Uterus (tissue), 4 donors: ENCODE measurements at regions of chr21 and their contacts with region 1.

Region 1: DNA sequence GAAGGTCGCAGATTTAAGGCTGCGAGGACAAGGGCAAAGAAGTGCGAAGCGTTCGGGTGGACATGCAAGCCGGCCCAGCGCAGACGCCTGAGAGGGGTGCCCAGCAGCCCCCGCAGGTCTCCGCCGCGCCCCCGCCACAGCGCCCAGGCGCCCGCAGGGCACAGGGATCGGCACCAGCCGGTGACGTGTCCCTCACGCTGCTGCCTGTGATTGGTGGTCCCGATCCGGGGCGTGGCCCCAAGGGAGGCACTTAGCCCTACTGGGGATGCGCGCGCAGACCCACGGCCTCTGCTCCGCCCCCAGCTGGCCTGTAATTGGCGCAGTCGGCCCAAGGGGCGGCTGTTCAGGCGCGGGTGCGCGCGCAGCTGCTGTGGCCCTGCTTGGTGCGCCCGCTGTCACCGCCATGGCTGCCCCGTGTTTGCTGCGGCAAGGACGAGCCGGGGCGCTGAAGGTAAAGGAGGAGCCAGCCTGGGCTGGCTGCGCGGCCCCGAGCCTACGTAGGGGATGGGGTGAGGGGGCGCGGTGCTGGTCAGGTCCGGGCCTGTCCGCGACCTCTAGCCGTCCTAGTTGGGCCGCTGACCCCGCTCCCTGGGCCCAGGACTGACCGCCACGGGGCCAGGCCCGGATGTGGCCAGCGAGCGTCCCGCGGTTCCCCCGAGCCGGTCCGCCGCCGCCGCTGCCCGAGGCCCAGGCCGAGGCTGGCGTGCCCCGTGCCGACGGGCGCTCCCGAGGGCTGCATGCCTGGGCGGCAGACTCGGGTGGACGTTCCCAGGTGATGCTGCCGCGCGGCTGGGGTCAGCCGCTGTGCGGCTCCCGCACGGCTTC is at the start of gene NDUFV3:
- DNase-seq: peak; percentile 99 to 100
- H3K4me3 ChIP-seq: peak within 1 kb of the TSS; percentile 58 to 69
- H3K27ac ChIP-seq: peak within 1 kb of the TSS; percentile 89 to 92
- H3K4me1 ChIP-seq: no peaks in the 10 kb centered on the region
- H3K27me3 ChIP-seq: no peaks in the 10 kb centered on the region
- CTCF ChIP-seq: peak in 1 of 4 experiments; percentile 11
- POLR2A ChIP-seq: peak; percentile 92 to 97
- total RNA-seq, gene NDUFV3: 41.5 to 55.9 (median 45.7) TPM

Region 2: GRCh38 chr21:42677339-42678321 is 215.5 kb before region 1 on chr21:
- intact Hi-C with region 1: no loop called
- DNase-seq: no peak
- H3K4me3 ChIP-seq: no peak overlapping the region
- H3K27ac ChIP-seq: no peak overlapping the region
- H3K4me1 ChIP-seq: no peaks in the 10 kb centered on the region
- H3K27me3 ChIP-seq: no peaks in the 10 kb centered on the region
- CTCF ChIP-seq: no peak
- POLR2A ChIP-seq: no peak

Region 3: DNA sequence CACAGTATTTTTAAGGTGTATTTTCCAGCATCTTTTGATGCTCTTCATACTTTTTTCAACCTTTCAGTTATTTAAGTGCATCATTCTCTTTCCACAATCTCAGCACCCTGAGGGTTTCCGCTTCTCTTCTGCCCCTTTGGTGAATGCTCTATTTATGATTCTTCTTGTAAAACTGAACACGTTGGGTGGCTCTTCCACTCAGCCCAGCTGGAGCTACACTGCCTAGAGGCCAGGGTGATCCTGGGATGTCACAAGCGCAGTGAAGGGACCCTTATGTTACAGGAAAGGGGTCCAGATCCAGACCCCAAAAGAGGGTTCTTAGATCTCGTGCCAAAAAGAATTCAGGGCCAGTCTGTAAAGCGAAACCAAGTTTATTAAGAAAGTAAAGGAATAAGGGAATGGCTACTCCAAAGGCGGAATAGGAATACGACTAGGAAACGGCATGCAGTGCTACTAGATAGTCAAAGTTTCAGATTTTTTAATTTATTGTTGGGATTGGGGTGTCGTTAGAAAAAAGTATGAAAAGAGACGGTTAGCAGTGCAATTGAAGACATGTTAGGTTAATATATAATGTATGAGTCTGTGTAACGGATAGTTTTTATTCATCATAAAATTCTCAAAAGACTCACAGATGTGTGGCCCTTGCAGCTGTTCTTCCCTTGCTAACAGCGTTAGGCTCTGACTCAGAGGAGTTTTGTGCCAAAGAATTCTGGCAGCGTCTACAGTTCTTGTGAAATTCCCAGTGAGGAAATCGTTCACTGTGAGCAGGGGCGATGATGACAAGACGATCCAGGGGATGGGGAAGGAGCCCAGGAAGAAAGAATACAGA is 46.7 kb after region 1 on chr21:
- intact Hi-C with region 1: no loop called
- DNase-seq: peak; percentile 90 to 95
- H3K4me3 ChIP-seq: peak overlapping the region; percentile 6 to 12
- H3K27ac ChIP-seq: peak overlapping the region; percentile 81 to 84
- H3K4me1 ChIP-seq: no peaks in the 10 kb centered on the region
- H3K27me3 ChIP-seq: no peaks in the 10 kb centered on the region
- CTCF ChIP-seq: no peak
- POLR2A ChIP-seq: no peak

Region 4: DNA sequence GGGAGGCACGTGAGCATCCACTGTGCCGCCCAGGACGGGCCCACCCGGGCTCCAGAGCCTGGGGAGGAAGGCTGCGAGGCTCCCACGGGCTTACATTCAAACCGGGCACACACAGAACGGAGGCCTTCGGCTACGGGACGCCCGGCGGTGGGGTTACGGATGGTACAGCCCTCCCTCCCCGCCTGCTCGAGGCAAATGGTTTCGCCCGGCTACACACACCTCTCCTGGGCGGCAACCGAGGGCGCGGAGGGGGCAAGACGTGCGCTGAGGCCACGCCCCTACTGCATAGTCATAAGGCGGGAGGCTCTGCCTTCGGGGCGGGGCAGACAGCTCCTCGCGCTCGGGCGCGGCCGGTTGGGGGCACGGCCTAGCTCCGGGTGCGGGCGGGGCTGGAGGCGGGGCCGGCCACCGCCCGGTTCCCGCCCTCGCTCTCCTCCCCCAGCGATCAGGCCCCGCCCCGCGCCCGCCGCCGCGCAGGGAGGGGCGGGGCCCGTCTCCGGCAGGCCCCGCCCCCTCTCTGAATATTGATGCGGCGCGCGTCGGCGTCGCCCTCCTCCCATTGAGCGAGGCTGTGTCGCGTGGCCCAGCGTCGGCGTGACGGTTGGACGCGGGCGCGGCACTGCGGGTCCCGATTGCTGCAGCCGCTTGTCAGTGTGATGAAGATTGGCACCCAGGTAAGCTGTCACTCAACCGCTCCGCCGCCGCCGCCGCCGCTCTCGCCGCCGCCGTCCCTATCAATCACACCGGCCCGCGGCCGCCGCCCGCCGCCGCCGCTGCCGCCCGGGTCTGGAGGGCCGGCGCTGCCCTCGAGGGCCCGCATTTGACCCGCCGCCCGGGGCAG is 81.1 kb after region 1 on chr21 and contains the start of gene PKNOX1:
- intact Hi-C with region 1: loop called (anchors 10 kb)
- DNase-seq: peak; percentile 98 to 99
- H3K4me3 ChIP-seq: peak within 1 kb of the TSS; percentile 61 to 82
- H3K27ac ChIP-seq: peak within 1 kb of the TSS; percentile 99 to 100
- H3K4me1 ChIP-seq: no peaks in the 10 kb centered on the region
- H3K27me3 ChIP-seq: no peaks in the 10 kb centered on the region
- CTCF ChIP-seq: peak in 1 of 4 experiments; percentile 16
- POLR2A ChIP-seq: peak; percentile 64 to 81
- total RNA-seq, gene PKNOX1: 6.2 to 82.5 (median 26.4) TPM

Region 5: GRCh38 chr21:43012595-43012994 is 119.5 kb after region 1 on chr21:
- intact Hi-C with region 1: no loop called
- DNase-seq: no peak
- H3K4me3 ChIP-seq: no peak overlapping the region
- H3K27ac ChIP-seq: no peak overlapping the region
- H3K4me1 ChIP-seq: no peaks in the 10 kb centered on the region
- H3K27me3 ChIP-seq: no peaks in the 10 kb centered on the region
- CTCF ChIP-seq: no peak
- POLR2A ChIP-seq: no peak